ENCODE measurements at regions of chr10 and their contacts with region 1.

Region 1: DNA sequence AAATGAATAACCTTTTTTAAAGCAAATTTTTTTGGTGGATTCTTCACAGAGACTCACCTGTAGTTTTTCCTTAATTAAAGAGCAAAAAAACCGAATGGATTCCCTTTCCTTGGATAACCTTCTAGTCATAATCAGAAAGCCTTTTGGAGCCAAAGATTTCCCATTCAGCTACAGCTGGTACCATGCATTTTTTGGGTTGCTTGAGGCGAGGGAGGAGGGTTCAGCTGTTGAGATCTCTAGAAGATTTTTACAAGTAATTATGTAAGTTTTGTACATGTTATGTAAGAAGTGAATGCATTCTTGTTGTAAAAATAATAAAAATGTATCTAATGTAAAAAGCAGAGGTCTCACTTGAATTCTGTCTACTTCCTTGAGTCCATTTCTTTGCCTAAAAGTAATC is 463.2 kb downstream of the SORCS3 start:
- DNase-seq: no peak
- H3K4me3 ChIP-seq: no peak overlapping the region
- H3K27ac ChIP-seq: no peak overlapping the region
- H3K4me1 ChIP-seq: no peaks in the 10 kb centered on the region
- H3K27me3 ChIP-seq: no peaks in the 10 kb centered on the region
- CTCF ChIP-seq: no peak
- EP300 ChIP-seq: no peak
- POLR2A ChIP-seq: no peak

Region 2: DNA sequence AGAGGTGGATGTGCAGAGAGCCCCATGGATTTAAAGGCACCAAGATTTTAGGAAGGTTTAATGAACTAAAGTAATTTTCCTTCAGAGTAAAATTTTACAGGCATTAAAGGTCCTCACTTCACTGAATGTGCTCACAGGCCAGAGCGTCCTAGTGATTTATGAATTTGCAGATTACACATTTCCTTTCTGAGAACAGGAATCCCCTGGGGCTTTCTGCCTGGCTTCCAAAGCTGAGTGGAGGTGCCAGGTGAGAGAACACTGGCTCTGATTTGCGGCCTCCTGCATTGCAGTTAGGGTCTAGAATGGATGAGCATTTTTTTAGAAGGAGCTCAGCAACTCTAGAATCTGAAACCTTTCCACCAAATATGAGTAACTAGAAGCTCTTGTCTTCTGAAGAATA is 268.9 kb before region 1 on chr10:
- in situ Hi-C with region 1: no loop called
- intact Hi-C with region 1: no loop called
- DNase-seq: no peak
- H3K4me3 ChIP-seq: no peak overlapping the region
- H3K27ac ChIP-seq: no peak overlapping the region
- H3K4me1 ChIP-seq: no peaks in the 10 kb centered on the region
- H3K27me3 ChIP-seq: no peaks in the 10 kb centered on the region
- CTCF ChIP-seq: no peak
- EP300 ChIP-seq: no peak
- POLR2A ChIP-seq: no peak

Region 3: GRCh38 chr10:105328503-105329133 is 224.3 kb after region 1 on chr10:
- in situ Hi-C with region 1: no loop called
- intact Hi-C with region 1: loop called (anchors 10 kb)
- DNase-seq: no peak
- H3K4me3 ChIP-seq: no peak overlapping the region
- H3K27ac ChIP-seq: no peak overlapping the region
- H3K4me1 ChIP-seq: peaks cover 0 to 11% (median 0%) of the 10 kb centered on the region in 4 donors
- H3K27me3 ChIP-seq: no peaks in the 10 kb centered on the region
- CTCF ChIP-seq: no peak
- EP300 ChIP-seq: no peak
- POLR2A ChIP-seq: no peak

Measured in transverse colon (tissue), 4 donors.